T-cell (primary cell): ENCODE measurements at regions of chr7 and their contacts with region 1.

Region 1: DNA sequence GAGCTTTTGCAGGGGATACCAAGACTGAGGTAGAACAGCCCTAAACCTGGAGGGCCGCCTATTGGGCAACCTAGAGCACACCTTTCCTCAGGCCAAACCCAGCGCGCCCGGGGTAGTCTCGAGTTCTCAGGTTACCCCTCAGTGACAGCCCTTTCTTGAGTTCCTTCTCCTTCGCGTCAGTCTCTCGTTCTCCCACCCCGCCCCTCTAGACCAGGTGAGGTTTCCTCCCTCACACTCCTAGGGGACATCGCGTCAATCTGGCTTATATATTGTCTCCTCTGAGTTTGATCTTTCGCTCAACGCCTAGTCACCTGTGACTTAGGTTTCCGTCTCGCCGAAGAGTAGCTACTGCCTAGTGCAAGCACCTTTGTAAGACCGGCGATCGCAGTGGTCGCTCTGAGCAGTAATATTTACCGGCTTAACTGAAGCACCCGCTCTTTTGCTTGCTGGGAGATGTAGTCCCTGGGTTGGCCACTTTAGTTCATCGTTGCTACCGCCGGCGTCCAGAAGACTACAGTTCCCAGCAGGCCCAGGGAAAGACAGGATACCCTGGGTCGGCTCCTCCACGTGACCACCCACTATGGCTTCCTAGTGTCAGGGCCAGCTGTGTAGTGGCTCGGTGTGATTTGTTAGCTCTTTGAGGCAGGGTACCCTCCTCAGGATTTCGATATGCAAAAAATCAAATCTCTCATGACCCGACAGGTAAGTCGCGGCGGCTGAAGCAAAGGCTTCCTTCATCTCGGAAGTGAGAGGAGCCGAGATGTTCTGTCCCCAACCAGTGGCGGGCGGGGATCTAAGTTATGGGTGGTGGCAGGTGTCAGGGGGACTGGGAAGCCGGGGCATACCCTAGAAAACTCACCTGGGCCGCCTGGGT is at the start of gene VPS50:
- DNase-seq: peak; percentile 82 to 99 (median 95)
- ATAC-seq: peak; percentile 95 to 99 (median 98)
- H3K4me3 ChIP-seq: peak within 1 kb of the TSS; percentile 71 to 87
- H3K4me3 Mint-ChIP-seq: peak within 1 kb of the TSS; percentile 91 to 97 (median 97)
- H3K27ac ChIP-seq: peak within 1 kb of the TSS; percentile 92
- H3K27ac Mint-ChIP-seq: peak within 1 kb of the TSS; percentile 96 to 98
- H3K4me1 ChIP-seq: peaks cover 4 to 15% of the 10 kb centered on the region in 2 experiments
- H3K4me1 Mint-ChIP-seq: peaks cover 19 to 23% (median 21%) of the 10 kb centered on the region in 3 donors
- H3K27me3 ChIP-seq: no peaks in the 10 kb centered on the region
- H3K27me3 Mint-ChIP-seq: no peaks in the 10 kb centered on the region
- total RNA-seq, gene VPS50: 27.8 to 35.4 (median 31.1) TPM

Region 2: DNA sequence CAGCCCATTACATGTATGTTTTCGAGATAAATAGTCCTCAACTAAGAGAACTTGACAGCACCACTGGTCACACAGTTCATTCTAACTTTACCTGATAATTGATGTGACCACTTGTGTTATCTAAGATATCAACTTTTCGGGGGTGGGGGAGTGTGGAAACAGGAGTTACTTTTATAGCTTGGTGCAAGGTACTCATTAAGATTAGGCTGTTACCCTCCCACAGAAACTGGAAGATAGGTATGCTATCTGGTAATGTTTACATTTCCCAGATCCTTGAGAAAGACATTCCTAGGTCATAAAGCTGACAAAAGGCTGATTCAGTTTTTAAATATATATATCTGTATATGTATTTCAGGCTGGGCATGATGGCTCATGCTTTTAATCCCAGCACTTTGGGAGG is 765.4 kb before region 1 on chr7:
- CTCF ChIA-PET with region 1: no interaction called
- POLR2A ChIA-PET with region 1: no interaction called
- DNase-seq: no peak
- ATAC-seq: no peak
- H3K4me3 ChIP-seq: no peak overlapping the region
- H3K4me3 Mint-ChIP-seq: no peak overlapping the region
- H3K27ac ChIP-seq: no peak overlapping the region
- H3K27ac Mint-ChIP-seq: no peak overlapping the region
- H3K4me1 ChIP-seq: peaks cover 0 to 1% of the 10 kb centered on the region in 2 experiments
- H3K4me1 Mint-ChIP-seq: no peaks in the 10 kb centered on the region
- H3K27me3 ChIP-seq: no peaks in the 10 kb centered on the region
- H3K27me3 Mint-ChIP-seq: no peaks in the 10 kb centered on the region

Region 3: DNA sequence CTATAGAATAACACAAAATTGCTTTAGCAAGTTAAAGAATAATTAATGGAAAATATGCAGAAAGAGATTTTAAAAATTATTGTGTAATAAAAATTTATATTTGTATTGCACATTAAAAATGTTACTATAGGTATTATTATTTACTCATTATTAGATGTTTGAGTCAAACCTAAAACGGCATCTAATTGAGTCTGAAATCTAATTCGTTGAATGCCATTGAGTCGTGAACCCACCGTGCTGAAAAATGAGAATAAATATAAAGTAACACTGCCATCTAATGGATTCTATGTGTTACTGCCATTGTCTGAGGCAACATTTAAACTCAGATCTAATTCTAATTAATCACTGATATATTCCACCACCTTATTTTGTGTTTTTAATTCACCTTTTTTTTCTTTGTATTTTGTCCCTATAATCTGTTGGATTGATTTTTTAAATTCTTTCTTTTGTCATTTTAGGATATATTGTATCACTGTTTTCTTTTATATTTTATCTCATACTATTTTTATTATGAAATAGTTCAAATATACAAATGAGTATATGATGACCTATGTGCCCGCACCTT is 176.4 kb before region 1 on chr7:
- CTCF ChIA-PET with region 1: no interaction called
- POLR2A ChIA-PET with region 1: no interaction called
- DNase-seq: peak in 1 of 35 experiments; percentile 62
- ATAC-seq: peak; percentile 49 to 70 (median 67)
- H3K4me3 ChIP-seq: no peak overlapping the region
- H3K4me3 Mint-ChIP-seq: no peak overlapping the region
- H3K27ac ChIP-seq: no peak overlapping the region
- H3K27ac Mint-ChIP-seq: no peak overlapping the region
- H3K4me1 ChIP-seq: peaks cover 0 to 3% of the 10 kb centered on the region in 2 experiments
- H3K4me1 Mint-ChIP-seq: peaks cover 0 to 8% (median 6%) of the 10 kb centered on the region in 3 donors
- H3K27me3 ChIP-seq: peaks cover 0 to 4% of the 10 kb centered on the region in 2 experiments
- H3K27me3 Mint-ChIP-seq: no peaks in the 10 kb centered on the region

Region 4: GRCh38 chr7:93117852-93118530 is 114.0 kb before region 1 on chr7 and contains the start of gene SAMD9:
- CTCF ChIA-PET with region 1: interaction called, 6 to 14 read pairs
- POLR2A ChIA-PET with region 1: interaction called, 4 to 13 read pairs
- DNase-seq: peak in 33 of 35 experiments; percentile 22 to 86 (median 64)
- ATAC-seq: peak; percentile 99 to 100 (median 99)
- H3K4me3 ChIP-seq: peak within 1 kb of the TSS; percentile 49 to 55
- H3K4me3 Mint-ChIP-seq: peak within 1 kb of the TSS; percentile 74 to 92 (median 86)
- H3K27ac ChIP-seq: peak within 1 kb of the TSS; percentile 70
- H3K27ac Mint-ChIP-seq: peak within 1 kb of the TSS; percentile 88 to 97
- H3K4me1 ChIP-seq: peaks cover 13 to 22% of the 10 kb centered on the region in 2 experiments
- H3K4me1 Mint-ChIP-seq: peaks cover 46 to 54% (median 49%) of the 10 kb centered on the region in 3 donors
- H3K27me3 ChIP-seq: no peaks in the 10 kb centered on the region
- H3K27me3 Mint-ChIP-seq: no peaks in the 10 kb centered on the region
- total RNA-seq, gene SAMD9: 28.2 to 42.2 (median 38.1) TPM

Region 5: GRCh38 chr7:93245525-93246432 is 13.7 kb after region 1 on chr7:
- CTCF ChIA-PET with region 1: interaction called, 6 to 52 read pairs
- POLR2A ChIA-PET with region 1: interaction called, 6 read pairs
- DNase-seq: peak in 1 of 35 experiments; percentile 50
- ATAC-seq: peak in 1 of 4 experiments; percentile 45
- H3K4me3 ChIP-seq: no peak overlapping the region
- H3K4me3 Mint-ChIP-seq: peak overlapping the region; percentile 8 to 64 (median 40)
- H3K27ac ChIP-seq: no peak overlapping the region
- H3K27ac Mint-ChIP-seq: peak overlapping the region in 1 of 2 donors; percentile 67
- H3K4me1 ChIP-seq: no peaks in the 10 kb centered on the region
- H3K4me1 Mint-ChIP-seq: peaks cover 15 to 20% (median 18%) of the 10 kb centered on the region in 3 donors
- H3K27me3 ChIP-seq: no peaks in the 10 kb centered on the region
- H3K27me3 Mint-ChIP-seq: no peaks in the 10 kb centered on the region

Region 6: GRCh38 chr7:93392984-93393383 is 160.9 kb after region 1 on chr7:
- CTCF ChIA-PET with region 1: no interaction called
- POLR2A ChIA-PET with region 1: no interaction called
- DNase-seq: no peak
- ATAC-seq: no peak
- H3K4me3 ChIP-seq: no peak overlapping the region
- H3K4me3 Mint-ChIP-seq: no peak overlapping the region
- H3K27ac ChIP-seq: no peak overlapping the region
- H3K27ac Mint-ChIP-seq: no peak overlapping the region
- H3K4me1 ChIP-seq: no peaks in the 10 kb centered on the region
- H3K4me1 Mint-ChIP-seq: no peaks in the 10 kb centered on the region
- H3K27me3 ChIP-seq: peaks cover 0 to 3% of the 10 kb centered on the region in 2 experiments
- H3K27me3 Mint-ChIP-seq: peaks cover 4 to 6% of the 10 kb centered on the region in 2 donors